ENCODE measurements at regions of chr15 and their contacts with region 1.

Region 1: DNA sequence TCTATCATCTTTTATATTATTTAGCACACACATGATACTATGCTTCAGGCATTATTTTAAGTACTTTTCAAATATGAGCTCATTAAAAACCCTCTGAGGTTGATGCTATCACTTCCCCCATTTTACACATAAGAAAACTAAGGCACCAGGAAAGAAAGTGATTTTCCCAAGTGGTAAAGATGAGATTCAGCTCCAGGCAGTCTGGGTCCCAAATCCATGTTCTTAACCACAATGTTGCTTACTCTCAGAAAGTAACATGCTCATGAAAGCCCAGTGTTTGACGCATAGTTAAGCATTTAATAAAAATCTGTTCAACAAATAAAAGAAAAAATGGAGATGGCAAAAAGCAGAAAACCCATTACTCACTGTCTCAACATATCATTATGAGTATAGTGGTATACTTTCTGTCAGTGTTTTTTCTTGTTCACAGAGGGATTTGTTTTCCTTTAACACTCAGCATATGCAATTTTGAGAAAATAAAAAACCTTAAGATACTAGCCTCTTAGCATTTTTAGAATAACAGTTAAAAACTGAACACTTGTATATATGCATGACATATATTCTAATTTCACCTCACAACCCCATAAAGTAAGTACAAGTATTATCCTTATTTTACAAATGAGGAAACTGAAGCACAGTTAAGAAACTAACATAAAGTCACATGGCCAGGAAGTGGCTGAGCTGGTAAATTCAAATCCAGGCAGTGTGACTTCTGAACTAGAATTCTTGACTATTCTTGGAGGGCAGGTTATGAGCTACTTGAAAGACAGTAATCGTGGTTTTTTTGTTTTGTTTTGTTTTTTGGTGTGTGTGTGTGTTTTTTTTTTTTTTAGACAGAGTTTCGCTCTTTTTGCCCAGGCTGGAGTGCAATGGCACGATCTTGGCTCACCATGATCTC is 10.4 kb downstream of the PEAK1 start:
- DNase-seq: peak; percentile 72
- ATAC-seq: peak; percentile 93
- H3K4me3 Mint-ChIP-seq: peak overlapping the region; percentile 51
- H3K27ac Mint-ChIP-seq: peak overlapping the region; percentile 88
- H3K4me1 Mint-ChIP-seq: peaks cover 50% of the 10 kb centered on the region
- H3K27me3 Mint-ChIP-seq: no peaks in the 10 kb centered on the region

Region 2: DNA sequence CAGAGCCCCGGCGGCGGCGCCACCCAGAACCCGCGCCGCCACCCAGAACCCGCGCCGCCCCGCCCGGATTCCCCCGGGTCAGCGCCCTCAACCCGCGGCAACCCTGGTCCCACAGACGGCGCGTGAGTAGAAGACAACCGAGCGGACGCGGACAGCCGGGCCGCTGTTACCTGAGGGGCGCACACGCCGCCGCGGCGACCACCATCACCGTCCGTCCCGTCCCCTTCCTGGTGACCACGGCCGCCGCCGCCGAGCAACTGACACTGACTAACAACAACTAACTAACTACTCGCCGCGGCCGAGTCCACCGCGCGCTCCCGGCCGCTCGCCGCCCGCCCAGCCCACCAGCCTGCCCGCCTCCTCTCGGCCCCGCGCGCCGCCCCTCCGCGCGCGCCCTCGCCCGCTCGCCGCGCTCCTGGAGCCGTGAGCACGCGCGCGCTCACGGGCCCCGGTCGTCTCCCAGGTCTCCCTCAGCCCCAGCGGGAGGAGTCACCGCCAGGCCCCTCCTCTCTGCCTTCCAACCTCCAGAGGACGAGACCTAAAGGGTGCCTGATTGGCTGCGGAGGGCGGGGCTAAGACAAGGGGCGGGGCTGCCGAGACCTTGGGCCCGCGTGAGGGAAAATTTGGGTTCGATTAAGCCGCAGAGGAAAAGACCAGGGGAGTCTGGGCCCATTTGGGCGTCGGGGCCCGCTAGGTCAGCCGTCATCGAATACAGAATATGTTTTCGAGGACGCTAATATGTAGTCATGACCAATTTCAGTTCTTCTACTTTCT is 10.5 kb after region 1 on chr15 and contains the start of gene PEAK1:
- CTCF ChIA-PET with region 1: interaction called, 8 read pairs
- POLR2A ChIA-PET with region 1: interaction called, 14 read pairs
- DNase-seq: peak; percentile 100
- ATAC-seq: peak; percentile 99
- H3K4me3 Mint-ChIP-seq: peak within 1 kb of the TSS; percentile 97
- H3K27ac Mint-ChIP-seq: peak within 1 kb of the TSS; percentile 99
- H3K4me1 Mint-ChIP-seq: peaks cover 42% of the 10 kb centered on the region
- H3K27me3 Mint-ChIP-seq: no peaks in the 10 kb centered on the region
- total RNA-seq, gene PEAK1: 30.4 to 30.7 TPM

Measured in activated CD8-positive, alpha-beta T cell treated with anti-CD3 and anti-CD28 coated beads, Interleukin-2, amount 10 ng/mL, durations not matched to agents 7 days and 5 days (primary cell).